Transverse colon (tissue), 4 donors: ENCODE measurements at regions of chr6 and their contacts with region 1.

Region 1: GRCh38 chr6:150813319-150813992 is 52.0 kb upstream of the MTHFD1L start:
- DNase-seq: no peak
- H3K4me3 ChIP-seq: no peak overlapping the region
- H3K27ac ChIP-seq: no peak overlapping the region
- H3K4me1 ChIP-seq: peaks cover 0 to 18% (median 2%) of the 10 kb centered on the region in 4 donors
- H3K27me3 ChIP-seq: no peaks in the 10 kb centered on the region
- CTCF ChIP-seq: no peak
- EP300 ChIP-seq: no peak
- POLR2A ChIP-seq: no peak

Region 2: DNA sequence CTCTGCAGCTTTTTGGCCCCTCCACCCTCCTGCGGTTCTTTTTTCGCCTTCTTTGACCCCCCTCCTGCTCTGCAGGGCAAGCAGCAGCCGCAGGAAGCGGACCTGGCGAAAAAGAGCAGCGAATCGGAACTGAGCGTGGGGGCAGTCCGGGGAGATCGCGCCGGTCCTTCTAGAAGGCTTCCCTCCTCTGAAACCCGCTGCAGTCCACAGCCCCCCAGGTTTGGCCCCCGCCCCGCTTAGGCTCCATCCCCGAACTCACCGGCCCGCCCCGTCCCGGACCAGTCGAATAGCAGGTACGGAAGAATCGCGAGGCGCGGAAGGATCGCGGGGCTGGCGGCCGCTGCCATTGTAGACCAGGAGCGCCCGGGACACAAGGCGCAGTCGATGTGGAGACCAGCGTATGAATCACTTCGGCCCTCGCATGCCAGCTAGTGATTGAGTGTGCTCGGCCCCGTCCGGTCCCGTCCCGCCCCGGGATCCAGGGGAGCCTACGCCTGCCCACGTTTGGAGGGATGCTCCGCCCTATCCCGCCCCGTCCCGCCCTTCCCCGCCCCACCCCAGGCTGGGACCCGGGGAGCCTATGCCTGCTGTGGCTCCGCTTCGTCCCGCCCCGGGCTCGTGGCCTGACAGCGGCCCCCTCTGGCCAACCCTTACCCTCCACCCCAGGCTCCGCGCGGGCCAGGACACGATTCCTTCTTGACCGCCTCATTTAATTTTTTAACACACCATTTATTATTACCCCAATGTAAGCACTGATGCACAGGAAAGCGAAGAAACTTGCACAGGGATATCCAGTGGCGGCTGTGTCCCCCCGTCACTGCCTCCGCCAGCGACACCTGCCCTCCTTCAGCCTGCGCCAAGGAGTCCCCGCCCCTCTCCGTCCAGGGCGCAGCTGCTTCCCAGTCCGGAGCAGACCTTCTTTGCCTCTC is 744.5 kb before region 1 on chr6 and contains the start of gene ULBP3:
- in situ Hi-C with region 1: loop called in 2 of 4 experiments (anchors 10 to 25 kb)
- intact Hi-C with region 1: no loop called
- DNase-seq: peak; percentile 93
- H3K4me3 ChIP-seq: peak within 1 kb of the TSS; percentile 49 to 57 (median 52)
- H3K27ac ChIP-seq: peak within 1 kb of the TSS; percentile 59 to 81 (median 68)
- H3K4me1 ChIP-seq: peaks cover 6 to 23% (median 15%) of the 10 kb centered on the region in 4 donors
- H3K27me3 ChIP-seq: peaks cover 4% of the 10 kb centered on the region
- CTCF ChIP-seq: peak; percentile 44 to 68 (median 51)
- EP300 ChIP-seq: no peak
- POLR2A ChIP-seq: peak; percentile 73
- total RNA-seq, gene ULBP3: 0.79 to 2.0 TPM in 2 of 4 donors, not detected in the others

Region 3: GRCh38 chr6:150079604-150080003 is 733.9 kb before region 1 on chr6:
- in situ Hi-C with region 1: loop called (anchors 10 to 25 kb)
- intact Hi-C with region 1: loop called (anchors 5 kb)
- DNase-seq: no peak
- H3K4me3 ChIP-seq: no peak overlapping the region
- H3K27ac ChIP-seq: no peak overlapping the region
- H3K4me1 ChIP-seq: no peaks in the 10 kb centered on the region
- H3K27me3 ChIP-seq: no peaks in the 10 kb centered on the region
- CTCF ChIP-seq: no peak
- EP300 ChIP-seq: no peak
- POLR2A ChIP-seq: no peak

Region 4: DNA sequence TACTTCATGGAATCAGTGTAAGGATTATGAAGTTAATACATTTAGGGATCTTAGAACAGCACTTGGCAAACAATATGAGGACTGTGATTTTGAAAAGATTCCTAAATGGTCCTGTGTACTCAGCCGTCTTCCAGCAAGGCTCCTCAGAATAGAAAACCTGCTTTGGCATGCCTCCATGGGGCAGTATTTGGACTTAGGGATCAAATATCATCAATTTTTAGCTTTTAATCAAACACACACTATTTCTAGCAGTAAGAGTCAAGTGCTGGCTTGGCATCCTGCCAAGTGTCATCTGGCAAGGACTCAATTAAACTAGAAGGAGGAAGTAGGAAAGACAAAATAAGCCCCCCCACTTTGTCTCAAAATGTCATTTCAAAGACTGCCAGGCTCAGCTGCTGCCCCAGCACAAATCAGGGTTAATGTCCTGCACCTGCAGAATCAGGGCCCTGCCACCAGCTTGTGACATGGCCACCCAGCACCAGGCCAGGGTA is 403.8 kb before region 1 on chr6:
- in situ Hi-C with region 1: loop called in 1 of 4 experiments (anchors 5 kb)
- intact Hi-C with region 1: no loop called
- DNase-seq: peak; percentile 58
- H3K4me3 ChIP-seq: no peak overlapping the region
- H3K27ac ChIP-seq: no peak overlapping the region
- H3K4me1 ChIP-seq: peaks cover 0 to 16% (median 7%) of the 10 kb centered on the region in 4 donors
- H3K27me3 ChIP-seq: no peaks in the 10 kb centered on the region
- CTCF ChIP-seq: no peak
- EP300 ChIP-seq: no peak
- POLR2A ChIP-seq: no peak

Region 5: GRCh38 chr6:150417899-150418826 is 395.3 kb before region 1 on chr6:
- in situ Hi-C with region 1: loop called (anchors 5 kb)
- intact Hi-C with region 1: loop called (anchors 1 kb)
- DNase-seq: peak; percentile 27
- H3K4me3 ChIP-seq: peak overlapping the region in 3 of 4 donors; percentile 19 to 51 (median 25)
- H3K27ac ChIP-seq: peak overlapping the region; percentile 40 to 56 (median 48)
- H3K4me1 ChIP-seq: peaks cover 0 to 13% (median 4%) of the 10 kb centered on the region in 4 donors
- H3K27me3 ChIP-seq: no peaks in the 10 kb centered on the region
- CTCF ChIP-seq: peak; percentile 75 to 79 (median 78)
- EP300 ChIP-seq: no peak
- POLR2A ChIP-seq: no peak

Region 6: DNA sequence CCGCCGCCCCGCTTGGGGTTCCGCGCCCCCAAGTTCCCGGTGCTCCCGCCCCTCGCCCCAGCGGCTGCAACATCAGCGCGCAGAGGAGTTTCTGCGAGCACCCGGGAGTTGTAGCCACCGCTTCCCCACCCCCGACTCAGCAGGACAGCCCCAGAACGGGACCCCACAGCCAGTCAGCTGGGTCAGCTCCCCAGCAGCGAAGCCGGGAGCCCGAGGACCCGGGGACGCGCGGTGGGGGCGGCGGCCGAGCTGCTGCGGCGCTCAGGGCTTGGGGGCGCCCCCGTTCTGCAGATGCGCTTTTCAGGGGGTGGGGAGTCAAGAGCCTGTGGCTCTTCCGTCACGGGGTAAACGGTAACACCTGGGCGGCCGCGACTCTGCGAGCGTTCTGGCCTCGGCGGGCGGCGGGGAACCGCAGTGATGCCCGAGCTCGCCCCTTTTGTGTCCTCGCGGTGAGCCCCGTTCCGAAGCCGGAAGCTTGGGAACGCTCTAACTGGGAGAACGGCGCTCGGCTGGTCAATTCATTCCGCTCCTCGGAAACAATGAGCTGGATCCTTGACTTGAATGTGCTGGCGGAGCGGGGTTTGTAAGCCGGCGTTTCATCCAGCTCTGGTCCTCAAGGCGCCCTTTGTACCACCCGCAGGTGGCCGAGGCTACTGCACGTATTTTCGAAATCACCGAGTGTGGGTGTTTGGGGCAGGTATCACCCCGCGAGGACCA is 213.0 kb before region 1 on chr6:
- in situ Hi-C with region 1: loop called in 1 of 4 experiments (anchors 25 kb)
- intact Hi-C with region 1: no loop called
- DNase-seq: peak; percentile 83
- H3K4me3 ChIP-seq: peak overlapping the region; percentile 63 to 91 (median 78)
- H3K27ac ChIP-seq: peak overlapping the region; percentile 85 to 96 (median 94)
- H3K4me1 ChIP-seq: peaks cover 0 to 32% (median 6%) of the 10 kb centered on the region in 4 donors
- H3K27me3 ChIP-seq: no peaks in the 10 kb centered on the region
- CTCF ChIP-seq: peak; percentile 48 to 80 (median 61)
- EP300 ChIP-seq: no peak
- POLR2A ChIP-seq: peak; percentile 57

Region 7: GRCh38 chr6:150876598-150876997 is 63.1 kb after region 1 on chr6:
- in situ Hi-C with region 1: no loop called
- intact Hi-C with region 1: loop called (anchors 1 kb)
- DNase-seq: peak; percentile 44
- H3K4me3 ChIP-seq: no peak overlapping the region
- H3K27ac ChIP-seq: peak overlapping the region in 3 of 4 donors; percentile 31 to 45 (median 36)
- H3K4me1 ChIP-seq: peaks cover 4 to 23% (median 8%) of the 10 kb centered on the region in 4 donors
- H3K27me3 ChIP-seq: no peaks in the 10 kb centered on the region
- CTCF ChIP-seq: no peak
- EP300 ChIP-seq: no peak
- POLR2A ChIP-seq: no peak